HepG2 (cell line): ENCODE measurements at regions of chr6 and their contacts with region 1.

Region 1: GRCh38 chr6:119323931-119324330 is 25.6 kb downstream of the MAN1A1 start:
- DNase-seq: peak; percentile 43
- ATAC-seq: peak; percentile 56
- H3K4me3 ChIP-seq: no peak overlapping the region
- H3K27ac ChIP-seq: peak overlapping the region; percentile 56
- H3K4me1 ChIP-seq: peaks cover 93% of the 10 kb centered on the region
- H3K27me3 ChIP-seq: no peaks in the 10 kb centered on the region
- CTCF ChIP-seq: no peak
- EP300 ChIP-seq: no peak; a peak in 1 of 4 replicates
- POLR2A ChIP-seq: no peak
- RAD21 ChIP-seq: no peak

Region 2: DNA sequence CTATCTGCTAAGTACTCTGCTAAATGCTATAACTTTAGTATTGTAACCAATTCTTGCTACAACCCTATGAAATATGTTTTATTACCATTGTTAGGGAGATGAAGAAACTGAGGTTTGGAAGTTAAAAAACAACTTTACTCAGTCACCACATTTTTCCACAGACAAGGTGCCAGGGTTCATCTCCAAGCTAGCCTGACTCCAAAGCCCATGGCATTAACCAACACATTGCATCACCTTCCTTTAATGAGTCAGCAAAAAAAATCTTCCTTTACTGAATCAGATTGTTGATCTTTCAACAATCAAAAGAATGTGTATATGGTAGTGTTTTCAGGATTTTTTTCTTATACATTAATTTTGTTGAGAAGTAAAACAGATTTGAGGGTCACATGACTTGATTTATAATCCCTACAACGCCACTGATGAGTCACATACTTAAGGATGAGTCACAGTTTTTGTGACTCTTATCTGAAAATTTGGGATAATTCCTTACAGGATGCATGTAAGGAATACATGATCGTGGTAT is 15.8 kb before region 1 on chr6:
- CTCF ChIA-PET with region 1: no interaction called
- POLR2A ChIA-PET with region 1: interaction called, 5 read pairs
- in situ Hi-C with region 1: no loop called
- intact Hi-C with region 1: loop called (anchors 2 kb)
- DNase-seq: peak; percentile 83
- ATAC-seq: peak; percentile 42
- H3K4me3 ChIP-seq: no peak overlapping the region; a peak in 1 of 6 replicates
- H3K27ac ChIP-seq: peak overlapping the region; percentile 52
- H3K4me1 ChIP-seq: peaks cover 58% of the 10 kb centered on the region
- H3K27me3 ChIP-seq: no peaks in the 10 kb centered on the region
- CTCF ChIP-seq: no peak
- EP300 ChIP-seq: peak in 1 of 2 experiments; percentile 81; a peak in 3 of 4 replicates
- POLR2A ChIP-seq: no peak
- RAD21 ChIP-seq: no peak

Region 3: DNA sequence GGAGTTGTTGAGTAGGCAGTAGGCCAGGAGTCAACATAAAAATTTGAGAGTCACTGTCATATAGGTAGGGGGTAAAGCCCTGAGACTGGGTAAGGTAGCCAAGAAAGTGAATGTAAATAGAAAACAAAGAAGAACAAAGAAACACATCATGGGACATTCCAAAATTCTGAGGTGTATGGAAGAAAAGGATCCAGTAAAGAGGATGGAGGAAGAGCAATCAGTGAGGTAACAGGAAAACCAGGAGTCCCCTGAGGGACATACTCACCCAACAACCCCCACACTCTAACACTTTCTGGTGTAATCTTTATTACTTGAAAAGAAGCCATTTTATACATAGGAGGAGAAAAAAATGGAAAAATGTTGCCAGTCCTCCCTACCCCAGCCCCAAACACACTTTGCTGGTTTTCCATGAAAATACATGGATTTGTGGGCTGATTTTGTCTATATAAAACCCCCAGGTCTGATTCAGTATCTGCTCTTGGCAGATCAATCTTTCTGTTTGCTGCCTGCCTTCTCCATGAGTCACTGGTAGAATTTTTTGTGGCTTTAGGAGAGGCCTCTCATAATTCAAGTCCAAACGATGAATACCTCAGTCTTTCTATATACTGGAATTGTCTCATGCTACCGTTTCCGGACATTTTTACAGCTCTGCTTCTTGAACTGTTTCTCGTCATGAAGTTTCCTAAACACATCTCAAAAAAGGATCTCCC is 297.1 kb after region 1 on chr6:
- CTCF ChIA-PET with region 1: no interaction called
- POLR2A ChIA-PET with region 1: no interaction called
- in situ Hi-C with region 1: no loop called
- intact Hi-C with region 1: no loop called
- DNase-seq: no peak
- ATAC-seq: no peak
- H3K4me3 ChIP-seq: no peak overlapping the region
- H3K27ac ChIP-seq: no peak overlapping the region
- H3K4me1 ChIP-seq: no peaks in the 10 kb centered on the region
- H3K27me3 ChIP-seq: no peaks in the 10 kb centered on the region
- CTCF ChIP-seq: no peak
- EP300 ChIP-seq: no peak
- POLR2A ChIP-seq: no peak
- RAD21 ChIP-seq: no peak